WTC11 (cell line): ENCODE measurements at regions of chr3 and their contacts with region 1.

Region 1: GRCh38 chr3:121995161-121996137 is 26.6 kb downstream of the ILDR1 start:
- DNase-seq: peak; percentile 79
- ATAC-seq: peak; percentile 99
- H3K4me3 Mint-ChIP-seq: no peak overlapping the region
- H3K27ac Mint-ChIP-seq: no peak overlapping the region
- H3K4me1 Mint-ChIP-seq: peaks cover 13% of the 10 kb centered on the region
- H3K27me3 Mint-ChIP-seq: no peaks in the 10 kb centered on the region
- CTCF ChIP-seq: peak; percentile 62; the same call in 1 of the 2 replicates

Region 2: DNA sequence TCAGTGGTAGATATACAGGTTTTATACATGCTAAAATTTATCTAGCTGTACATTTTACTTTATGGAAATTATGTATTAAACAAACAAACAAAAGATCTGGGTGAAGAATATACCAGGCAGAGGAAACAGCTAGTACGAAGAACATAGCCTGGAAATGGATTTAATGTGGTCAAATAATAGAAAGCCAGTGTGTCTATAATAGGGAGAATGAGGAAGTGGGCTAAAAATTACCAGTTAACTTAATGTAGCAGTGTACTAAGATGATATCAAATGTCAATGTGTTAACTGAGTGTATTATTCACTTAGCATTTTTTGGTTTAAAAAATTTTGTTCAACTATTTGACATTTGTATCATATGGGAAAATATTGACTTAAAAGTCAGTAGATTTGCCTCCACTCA is 124.0 kb before region 1 on chr3:
- CTCF ChIA-PET with region 1: interaction called, 13 read pairs
- POLR2A ChIA-PET with region 1: no interaction called
- DNase-seq: no peak
- ATAC-seq: no peak
- H3K4me3 Mint-ChIP-seq: no peak overlapping the region
- H3K27ac Mint-ChIP-seq: no peak overlapping the region
- H3K4me1 Mint-ChIP-seq: no peaks in the 10 kb centered on the region
- H3K27me3 Mint-ChIP-seq: no peaks in the 10 kb centered on the region
- CTCF ChIP-seq: no peak

Region 3: GRCh38 chr3:121894301-121894990 is 101.0 kb before region 1 on chr3 and contains the start of gene SLC15A2:
- CTCF ChIA-PET with region 1: interaction called, 34 read pairs
- POLR2A ChIA-PET with region 1: no interaction called
- DNase-seq: peak; percentile 18
- ATAC-seq: peak; percentile 88
- H3K4me3 Mint-ChIP-seq: peak within 1 kb of the TSS; percentile 57
- H3K27ac Mint-ChIP-seq: peak within 1 kb of the TSS; percentile 99
- H3K4me1 Mint-ChIP-seq: peaks cover 51% of the 10 kb centered on the region
- H3K27me3 Mint-ChIP-seq: no peaks in the 10 kb centered on the region
- CTCF ChIP-seq: no peak
- total RNA-seq, gene SLC15A2: 2.4 to 3.8 TPM (median 3.4 TPM) in 3 replicates

Region 4: DNA sequence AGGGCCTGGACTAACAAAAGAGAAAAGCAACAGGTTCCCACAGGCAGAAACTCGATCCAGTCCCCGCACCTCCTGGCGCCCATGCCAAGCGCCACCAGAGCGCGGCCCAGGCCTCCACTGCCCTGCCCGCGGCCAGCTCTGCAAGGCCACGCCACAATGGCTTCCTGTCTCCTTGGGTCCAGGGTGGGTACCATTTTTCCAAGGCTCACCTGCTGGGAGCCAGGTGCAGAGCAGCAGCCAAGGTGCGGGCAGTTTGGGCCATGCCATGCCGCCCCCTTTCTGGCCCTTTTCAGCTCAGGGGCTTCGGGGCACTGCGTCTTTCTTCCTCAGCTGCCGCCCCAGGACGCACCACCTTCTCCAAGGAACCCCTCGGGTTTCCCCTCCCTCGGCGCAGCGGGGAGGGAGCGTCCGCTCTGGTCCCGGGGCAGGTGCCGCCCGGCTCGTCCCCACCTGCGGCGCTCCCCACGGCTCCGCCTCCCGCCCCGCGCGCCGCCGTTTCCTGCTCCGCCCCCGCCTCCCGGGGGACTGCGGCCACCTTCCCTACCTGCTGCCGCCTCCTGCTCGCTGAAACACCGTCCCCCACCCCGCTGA is 26.5 kb after region 1 on chr3 and contains the start of gene ILDR1:
- CTCF ChIA-PET with region 1: interaction called, 20 read pairs
- POLR2A ChIA-PET with region 1: no interaction called
- DNase-seq: peak; percentile 68
- ATAC-seq: peak; percentile 82
- H3K4me3 Mint-ChIP-seq: peak within 1 kb of the TSS; percentile 79
- H3K27ac Mint-ChIP-seq: peak within 1 kb of the TSS; percentile 57
- H3K4me1 Mint-ChIP-seq: peaks cover 19% of the 10 kb centered on the region
- H3K27me3 Mint-ChIP-seq: no peaks in the 10 kb centered on the region; the same call in 1 of the 2 replicates
- CTCF ChIP-seq: no peak
- total RNA-seq, gene ILDR1: 2.3 to 3.4 TPM (median 2.8 TPM) in 3 replicates

Region 5: DNA sequence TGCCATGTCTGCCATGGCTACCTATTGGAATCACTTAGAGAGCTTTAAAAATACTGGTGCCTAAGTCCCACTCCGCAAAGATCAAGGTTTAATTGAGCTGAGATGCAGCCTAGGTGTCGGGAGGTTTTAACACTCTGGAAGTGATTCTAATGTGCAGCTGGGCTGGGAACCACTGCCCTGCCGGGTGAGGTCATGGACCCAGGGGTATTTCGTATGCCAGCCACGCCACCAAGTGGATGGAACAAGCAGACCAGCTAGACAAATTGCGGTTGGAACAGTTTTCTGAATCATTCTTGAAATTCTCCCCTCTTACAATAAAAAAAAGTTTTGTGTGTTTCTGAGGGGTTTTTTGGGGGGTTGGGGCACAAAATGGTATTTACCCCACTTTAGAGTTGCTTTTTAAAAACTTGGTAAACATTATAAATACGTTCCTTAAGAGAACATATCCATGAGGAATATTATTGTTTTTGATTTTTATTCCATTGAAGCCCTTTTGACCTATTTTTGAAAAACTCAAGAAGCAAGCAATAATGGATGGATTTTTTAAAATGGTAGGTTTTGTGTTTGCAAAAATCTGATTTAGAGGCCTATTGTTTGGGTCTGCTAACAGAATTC is 263.4 kb after region 1 on chr3:
- CTCF ChIA-PET with region 1: interaction called, 10 read pairs
- POLR2A ChIA-PET with region 1: no interaction called
- DNase-seq: peak; percentile 71
- ATAC-seq: peak; percentile 92
- H3K4me3 Mint-ChIP-seq: no peak overlapping the region
- H3K27ac Mint-ChIP-seq: no peak overlapping the region
- H3K4me1 Mint-ChIP-seq: peaks cover 8% of the 10 kb centered on the region
- H3K27me3 Mint-ChIP-seq: no peaks in the 10 kb centered on the region
- CTCF ChIP-seq: no peak